Natural killer cell (primary cell): ENCODE measurements at regions of chr5 and their contacts with region 1.

Region 1: DNA sequence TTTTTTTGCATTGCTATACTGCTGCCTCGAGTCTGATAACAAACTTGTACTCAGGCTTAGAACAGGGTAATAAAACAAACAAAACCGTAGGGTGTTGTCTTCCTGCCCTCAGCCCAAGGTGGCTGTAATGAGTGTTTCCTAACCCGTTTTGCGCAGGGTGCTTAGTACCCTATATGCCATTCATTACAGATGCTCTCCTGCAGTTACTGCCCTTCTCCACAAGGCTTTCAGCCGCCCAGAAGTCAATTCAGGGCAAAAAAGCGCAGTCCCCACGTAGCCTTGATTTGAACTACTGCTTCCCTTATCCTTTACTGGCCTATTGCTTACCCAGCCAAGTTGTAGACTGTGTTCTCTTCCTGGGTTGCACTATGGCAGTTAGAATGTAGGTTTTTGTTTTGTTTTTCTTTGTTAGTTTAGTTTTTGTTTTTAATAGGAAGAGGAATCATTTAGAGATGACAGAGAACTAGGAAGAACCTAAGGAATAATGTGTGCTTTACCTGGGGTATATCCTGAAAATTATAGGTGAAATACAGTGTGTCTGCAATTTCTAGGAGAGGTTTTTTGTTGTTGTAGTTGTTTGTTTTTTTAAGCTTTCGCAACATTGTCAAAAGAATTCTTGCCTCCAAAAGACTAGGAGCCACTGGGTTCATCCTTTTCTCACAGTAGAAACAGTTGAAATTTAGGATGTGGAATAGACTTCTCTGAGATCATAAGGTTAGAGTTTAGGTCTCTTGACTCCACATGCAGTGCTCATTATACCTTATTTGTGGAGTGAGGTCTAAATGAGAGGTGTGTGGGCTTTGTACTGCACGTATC is 1.3 kb downstream of the HMGXB3 start:
- DNase-seq: peak; percentile 38 to 83
- ATAC-seq: peak; percentile 68 to 79 (median 68)
- H3K4me3 ChIP-seq: peak overlapping the region; percentile 77
- H3K4me3 Mint-ChIP-seq: peak overlapping the region; percentile 84
- H3K27ac ChIP-seq: peak overlapping the region; percentile 91
- H3K27ac Mint-ChIP-seq: peak overlapping the region; percentile 74 to 93
- H3K4me1 ChIP-seq: peaks cover 15% of the 10 kb centered on the region
- H3K4me1 Mint-ChIP-seq: peaks cover 36 to 48% of the 10 kb centered on the region in 2 donors
- H3K27me3 ChIP-seq: no peaks in the 10 kb centered on the region
- H3K27me3 Mint-ChIP-seq: no peaks in the 10 kb centered on the region
- CTCF ChIP-seq: peak; percentile 67

Region 2: DNA sequence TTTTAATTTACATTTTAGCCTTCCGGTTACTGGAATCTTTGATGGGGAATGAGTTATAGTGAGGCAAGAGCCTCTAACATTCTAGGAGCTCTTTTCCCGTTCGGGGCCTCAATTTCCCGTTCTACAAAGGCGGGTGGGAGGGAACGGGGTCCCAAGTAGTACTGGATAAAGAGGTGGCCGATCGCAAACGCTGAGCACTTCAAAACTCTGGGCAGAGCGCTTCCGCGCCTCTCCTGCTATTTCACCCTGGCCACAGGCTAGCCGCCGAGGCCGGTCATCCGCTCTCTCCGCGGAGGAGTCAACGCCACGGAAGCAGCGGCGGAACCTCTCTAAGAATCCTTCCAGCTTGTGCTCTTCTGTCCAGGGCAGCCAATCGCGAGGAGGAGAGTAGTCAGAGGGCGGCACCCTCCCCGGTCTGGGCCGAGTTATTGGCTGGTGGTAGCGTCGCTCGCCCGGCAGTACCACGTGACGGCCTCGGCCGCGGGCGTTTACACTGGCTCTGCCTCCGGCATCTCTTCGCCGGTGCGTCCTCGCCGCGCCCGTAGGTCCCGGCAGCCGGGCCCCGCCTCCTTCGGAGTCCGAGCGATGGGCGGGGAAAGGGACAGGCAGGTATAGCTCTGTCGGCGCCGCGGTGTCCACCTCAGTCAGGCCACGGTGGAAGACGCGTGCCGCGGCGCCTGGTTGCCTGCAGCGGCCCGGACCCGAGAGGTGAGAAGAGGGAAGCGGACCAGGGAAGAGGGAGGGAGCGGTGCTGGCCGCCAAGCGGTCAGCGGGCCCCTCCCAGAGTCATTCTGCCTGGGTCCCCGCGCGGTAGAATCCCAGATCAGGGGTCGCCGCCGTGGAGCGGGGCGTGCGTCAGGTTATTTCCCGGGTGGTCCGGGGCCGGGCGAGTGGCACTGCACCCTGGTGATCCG is 41.4 kb before region 1 on chr5 and contains the start of gene SLC26A2:
- intact Hi-C with region 1: loop called (anchors 1 kb)
- DNase-seq: peak; percentile 91 to 96
- ATAC-seq: peak; percentile 96 to 99 (median 98)
- H3K4me3 ChIP-seq: peak within 1 kb of the TSS; percentile 87
- H3K4me3 Mint-ChIP-seq: peak within 1 kb of the TSS; percentile 97
- H3K27ac ChIP-seq: peak within 1 kb of the TSS; percentile 80
- H3K27ac Mint-ChIP-seq: peak within 1 kb of the TSS; percentile 95 to 96
- H3K4me1 ChIP-seq: peaks cover 17% of the 10 kb centered on the region
- H3K4me1 Mint-ChIP-seq: peaks cover 29 to 36% of the 10 kb centered on the region in 2 donors
- H3K27me3 ChIP-seq: no peaks in the 10 kb centered on the region
- H3K27me3 Mint-ChIP-seq: no peaks in the 10 kb centered on the region
- CTCF ChIP-seq: no peak
- total RNA-seq, gene SLC26A2: 6.2 to 10.9 (median 8.1) TPM

Region 3: DNA sequence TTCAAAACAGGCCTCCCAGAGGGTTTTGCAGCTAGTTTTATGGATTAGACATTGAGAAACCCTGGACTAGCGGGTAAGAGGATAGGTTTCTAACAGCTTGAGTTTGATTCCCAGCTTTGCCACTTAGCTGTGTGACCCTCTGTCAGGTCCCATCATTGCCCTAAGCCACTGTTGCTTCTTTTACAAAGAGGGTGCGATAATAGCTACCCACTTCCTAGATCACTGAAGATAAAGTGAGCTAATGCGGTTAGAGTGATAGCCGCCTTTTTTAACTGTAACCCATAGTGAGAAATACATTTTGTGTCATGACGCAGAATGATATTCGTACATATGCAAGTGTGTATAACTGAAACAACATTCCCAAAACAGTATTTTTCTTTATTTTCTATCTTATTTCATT is 44.1 kb after region 1 on chr5:
- intact Hi-C with region 1: loop called (anchors 1 kb)
- DNase-seq: peak in 1 of 2 donors; percentile 75
- ATAC-seq: peak; percentile 89 to 94 (median 90)
- H3K4me3 ChIP-seq: no peak overlapping the region
- H3K4me3 Mint-ChIP-seq: peak overlapping the region; percentile 63
- H3K27ac ChIP-seq: no peak overlapping the region
- H3K27ac Mint-ChIP-seq: peak overlapping the region; percentile 71 to 82
- H3K4me1 ChIP-seq: peaks cover 48% of the 10 kb centered on the region
- H3K4me1 Mint-ChIP-seq: peaks cover 75 to 76% of the 10 kb centered on the region in 2 donors
- H3K27me3 ChIP-seq: peaks cover 20% of the 10 kb centered on the region
- H3K27me3 Mint-ChIP-seq: peaks cover 47 to 49% of the 10 kb centered on the region in 2 donors
- CTCF ChIP-seq: no peak